ENCODE measurements at regions of chr2 and their contacts with region 1.

Region 1: DNA sequence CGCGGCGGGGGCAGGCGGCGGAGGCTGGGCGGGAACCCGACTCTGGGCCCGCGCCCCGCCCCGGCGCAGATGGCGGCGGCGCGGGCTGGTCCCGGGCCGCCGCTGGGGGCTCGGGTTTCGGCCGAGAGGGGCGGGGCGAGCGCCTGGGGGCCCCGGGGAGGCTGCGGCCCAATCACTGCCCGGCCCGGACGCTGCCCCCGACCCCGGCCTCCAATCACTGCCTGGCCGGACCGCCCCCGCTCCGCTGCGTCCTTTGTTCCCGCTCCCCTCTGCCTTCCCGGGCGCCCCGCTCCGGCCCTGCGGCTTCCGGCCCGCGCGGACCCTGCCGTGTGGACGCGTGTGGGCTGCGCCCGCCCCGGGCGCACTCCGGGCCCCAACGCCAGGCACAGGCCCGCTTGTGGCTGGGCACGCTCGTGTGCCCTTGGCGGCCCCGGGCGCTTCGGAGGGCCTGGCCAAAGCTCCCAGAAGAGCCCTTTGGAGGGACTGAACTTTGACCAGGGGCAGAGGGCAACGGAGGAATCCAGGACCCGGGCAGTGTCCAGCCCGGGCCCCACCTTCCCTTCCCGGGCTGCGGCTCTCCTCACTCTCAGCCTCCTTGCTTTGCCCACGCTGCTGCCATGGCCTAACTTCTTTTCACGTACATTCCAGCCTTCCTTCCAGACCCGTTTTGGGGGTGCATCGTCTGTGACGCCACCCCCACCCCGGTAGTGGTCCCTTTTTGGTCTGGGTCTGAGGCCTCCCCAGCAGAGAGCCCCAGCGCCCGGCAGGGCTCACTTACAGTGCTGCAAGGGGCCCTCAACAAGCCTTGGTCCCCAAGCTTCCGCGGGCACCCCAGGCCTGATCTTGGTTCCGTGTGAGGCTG is 27.1 kb upstream of the PTMA start:
- DNase-seq: peak; percentile 94 to 97 (median 94)
- H3K4me3 ChIP-seq: peak overlapping the region in 2 of 3 donors; percentile 38 to 59
- H3K27ac ChIP-seq: peak overlapping the region; percentile 92 to 94
- H3K4me1 ChIP-seq: peaks cover 0 to 6% (median 0%) of the 10 kb centered on the region in 3 donors
- H3K27me3 ChIP-seq: no peaks in the 10 kb centered on the region
- CTCF ChIP-seq: no peak

Region 2: DNA sequence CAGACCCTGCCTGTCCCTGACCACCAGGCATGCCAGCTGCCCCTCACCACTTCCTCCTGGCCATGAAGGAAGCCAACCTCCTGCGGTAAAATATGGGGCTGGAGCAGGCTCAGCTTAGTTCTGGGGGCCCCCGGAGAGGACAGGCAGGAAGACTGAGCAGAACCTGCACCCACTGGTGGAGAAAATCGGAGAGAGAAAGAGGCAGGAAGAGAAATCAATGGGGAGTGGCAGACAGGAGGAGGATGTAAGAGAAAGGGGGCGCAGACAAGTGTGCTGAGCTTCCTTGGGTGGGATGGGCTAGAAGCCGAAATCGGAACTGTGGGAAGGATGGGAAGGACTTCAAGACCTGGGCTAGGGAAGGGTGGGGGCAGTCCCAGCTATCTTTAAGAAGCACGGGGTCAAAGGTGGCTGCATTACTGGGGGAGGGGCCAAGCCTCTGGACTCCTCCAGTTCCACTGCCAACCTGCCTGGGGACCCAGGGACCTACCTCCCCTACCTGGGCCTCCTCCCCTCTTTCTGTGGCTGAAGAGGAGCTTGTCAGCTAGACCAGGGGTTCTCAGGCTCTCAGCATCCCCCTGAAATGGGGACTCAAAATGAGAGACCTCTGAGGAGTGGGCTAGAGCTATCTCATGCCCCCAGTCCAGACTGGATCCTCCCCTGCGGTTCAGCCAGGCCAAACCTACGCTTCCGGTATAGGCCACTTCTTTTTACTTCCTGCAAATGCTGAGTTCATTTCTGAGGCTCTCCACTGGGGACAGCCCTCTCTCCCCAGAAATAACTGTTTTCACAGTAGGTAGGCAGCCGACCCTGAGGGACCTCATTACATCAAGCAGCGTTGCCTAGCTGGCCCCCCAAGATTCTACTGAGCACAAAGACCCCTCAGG is 319.3 kb before region 1 on chr2:
- intact Hi-C with region 1: no loop called
- DNase-seq: peak in 1 of 5 donors; percentile 55
- H3K4me3 ChIP-seq: no peak overlapping the region
- H3K27ac ChIP-seq: no peak overlapping the region
- H3K4me1 ChIP-seq: no peaks in the 10 kb centered on the region
- H3K27me3 ChIP-seq: no peaks in the 10 kb centered on the region
- CTCF ChIP-seq: no peak

Region 3: DNA sequence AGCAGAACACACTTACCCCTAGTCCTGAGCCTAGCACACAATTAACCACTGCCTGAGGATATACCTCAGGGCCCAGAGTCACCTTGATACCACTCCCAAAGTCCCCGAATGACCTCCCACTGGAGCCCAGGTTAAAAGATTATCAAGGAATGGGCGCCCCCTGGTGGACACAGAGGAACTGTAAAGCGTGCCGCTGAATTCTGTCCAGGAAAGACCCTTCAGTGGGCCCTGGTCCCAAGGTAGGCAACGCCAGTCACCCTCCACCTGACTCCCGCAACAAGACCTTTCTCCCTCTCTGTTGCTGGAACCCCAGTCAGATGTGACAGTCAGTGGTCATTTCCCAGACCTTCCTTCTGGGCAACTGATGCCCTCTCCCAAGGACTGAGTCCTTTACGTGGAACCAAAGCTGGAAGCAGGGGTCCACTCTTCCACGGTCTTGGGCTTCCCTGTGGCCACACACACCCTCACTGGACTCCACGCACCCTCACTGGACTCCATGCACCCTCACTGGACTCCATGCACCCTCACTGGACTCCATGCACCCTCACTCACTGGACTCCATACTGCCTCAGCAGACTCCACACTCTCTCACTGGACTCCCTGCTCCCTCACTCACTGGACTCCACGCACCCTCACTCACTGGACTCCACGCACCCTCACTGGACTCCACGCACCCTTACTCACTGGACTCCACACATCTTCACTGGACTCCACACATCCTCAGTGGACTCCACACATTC is 34.2 kb after region 1 on chr2:
- intact Hi-C with region 1: loop called (anchors 5 kb)
- DNase-seq: peak; percentile 79 to 90 (median 84)
- H3K4me3 ChIP-seq: no peak overlapping the region
- H3K27ac ChIP-seq: no peak overlapping the region
- H3K4me1 ChIP-seq: peaks cover 2 to 22% (median 20%) of the 10 kb centered on the region in 3 donors
- H3K27me3 ChIP-seq: no peaks in the 10 kb centered on the region
- CTCF ChIP-seq: peak; percentile 71

Measured in kidney (tissue), 22 donors.